ENCODE measurements at regions of chr21 and their contacts with region 1.

Region 1: GRCh38 chr21:42392721-42393442 is 3.0 kb downstream of the TMPRSS3 start:
- DNase-seq: no peak
- H3K4me3 Mint-ChIP-seq: peak overlapping the region; percentile 41
- H3K27ac Mint-ChIP-seq: peak overlapping the region; percentile 87
- H3K4me1 Mint-ChIP-seq: peaks cover 84% of the 10 kb centered on the region
- H3K27me3 Mint-ChIP-seq: no peaks in the 10 kb centered on the region

Region 2: DNA sequence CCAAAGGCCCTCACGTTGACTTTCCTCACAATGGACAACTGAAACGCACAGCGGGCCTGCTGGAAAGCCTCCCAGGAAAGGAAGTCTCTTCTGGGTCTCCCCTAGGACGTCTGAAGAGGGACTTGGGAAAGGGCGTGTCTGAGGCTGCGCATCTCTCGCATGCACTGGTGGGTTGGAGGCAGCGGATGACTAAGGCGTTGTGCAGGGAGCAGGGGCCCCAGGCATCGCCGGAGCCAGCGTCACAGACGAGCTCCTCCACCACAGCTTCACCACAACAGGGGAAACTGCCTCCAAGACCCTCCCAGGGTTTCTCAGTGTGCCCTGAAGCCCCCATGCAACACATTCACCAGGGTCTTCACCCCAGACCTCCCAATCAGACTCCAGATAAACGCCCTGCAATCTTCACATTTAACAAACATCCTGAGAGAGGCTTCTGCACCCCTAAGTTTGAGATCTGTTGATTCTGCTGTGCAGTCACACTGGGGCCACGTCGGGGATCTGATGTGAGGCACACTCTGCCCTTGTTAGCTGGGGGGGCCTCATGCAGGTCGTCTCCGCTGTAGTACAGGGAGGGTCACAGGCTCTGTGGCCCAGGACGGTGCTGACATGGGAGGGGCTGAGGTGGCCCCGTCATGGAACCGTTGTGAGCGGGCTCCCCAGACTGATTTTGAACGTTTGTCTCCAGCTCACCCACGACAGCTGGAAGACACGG is 19.5 kb before region 1 on chr21:
- intact Hi-C with region 1: loop called (anchors 2 kb)
- DNase-seq: no peak
- H3K4me3 Mint-ChIP-seq: no peak overlapping the region
- H3K27ac Mint-ChIP-seq: peak overlapping the region; percentile 82
- H3K4me1 Mint-ChIP-seq: peaks cover 45% of the 10 kb centered on the region
- H3K27me3 Mint-ChIP-seq: no peaks in the 10 kb centered on the region

Region 3: DNA sequence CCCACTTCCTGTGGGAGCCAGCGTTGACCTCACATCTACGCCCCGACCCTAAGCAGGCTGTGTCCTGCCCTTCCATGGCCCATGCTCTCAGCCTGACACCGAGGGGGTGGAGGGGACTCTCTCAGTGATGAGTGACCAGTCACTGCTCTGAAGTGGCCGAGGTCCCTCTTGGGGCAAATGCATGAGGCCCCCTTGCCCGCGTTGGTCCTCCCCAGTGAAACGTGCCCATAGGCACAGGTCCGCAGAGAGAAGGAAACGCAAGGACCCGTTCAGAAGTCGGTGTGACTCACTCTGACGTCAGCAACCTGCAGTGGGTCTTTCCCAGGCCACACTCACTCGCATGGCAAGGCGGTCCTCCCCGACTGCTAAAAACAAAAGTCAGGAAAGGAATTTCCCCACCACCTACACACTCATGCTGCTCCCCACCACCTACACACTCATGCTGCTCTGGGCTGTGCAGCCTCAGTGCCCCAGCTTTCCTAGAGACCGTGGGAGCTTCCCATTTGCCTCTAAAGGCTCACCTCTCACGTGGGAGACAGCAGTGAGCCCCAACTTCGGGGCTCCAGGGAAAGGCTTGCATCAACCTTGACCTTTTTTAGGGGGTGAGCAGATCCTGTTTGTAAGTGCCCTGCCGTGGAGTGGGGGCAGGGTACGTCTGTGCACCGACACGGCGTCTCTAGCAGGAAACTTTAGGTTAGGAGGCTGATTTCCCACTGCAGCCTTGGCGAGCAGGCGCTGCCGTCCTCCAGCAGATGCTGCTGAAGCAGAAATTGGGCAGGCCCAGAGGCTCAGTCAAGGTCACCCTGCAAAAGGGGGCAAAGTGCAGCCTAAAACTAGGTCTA is 22.3 kb after region 1 on chr21:
- intact Hi-C with region 1: loop called (anchors 1 kb)
- DNase-seq: peak; percentile 82
- H3K4me3 Mint-ChIP-seq: peak overlapping the region; percentile 57
- H3K27ac Mint-ChIP-seq: no peak overlapping the region
- H3K4me1 Mint-ChIP-seq: peaks cover 58% of the 10 kb centered on the region
- H3K27me3 Mint-ChIP-seq: no peaks in the 10 kb centered on the region

Region 4: GRCh38 chr21:42556960-42557359 is 164.1 kb after region 1 on chr21:
- intact Hi-C with region 1: no loop called
- DNase-seq: no peak
- H3K4me3 Mint-ChIP-seq: no peak overlapping the region
- H3K27ac Mint-ChIP-seq: no peak overlapping the region
- H3K4me1 Mint-ChIP-seq: no peaks in the 10 kb centered on the region
- H3K27me3 Mint-ChIP-seq: no peaks in the 10 kb centered on the region